PC-3 (cell line): ENCODE measurements at regions of chr20 and their contacts with region 1.

Region 1: GRCh38 chr20:51456511-51457509 is 85.7 kb downstream of the NFATC2 start:
- DNase-seq: peak; percentile 100
- ATAC-seq: peak; percentile 87
- H3K4me3 ChIP-seq: peak overlapping the region; percentile 55
- H3K27ac ChIP-seq: peak overlapping the region; percentile 91
- H3K4me1 ChIP-seq: peaks cover 24% of the 10 kb centered on the region
- H3K27me3 ChIP-seq: no peaks in the 10 kb centered on the region
- CTCF ChIP-seq: no peak

Region 2: DNA sequence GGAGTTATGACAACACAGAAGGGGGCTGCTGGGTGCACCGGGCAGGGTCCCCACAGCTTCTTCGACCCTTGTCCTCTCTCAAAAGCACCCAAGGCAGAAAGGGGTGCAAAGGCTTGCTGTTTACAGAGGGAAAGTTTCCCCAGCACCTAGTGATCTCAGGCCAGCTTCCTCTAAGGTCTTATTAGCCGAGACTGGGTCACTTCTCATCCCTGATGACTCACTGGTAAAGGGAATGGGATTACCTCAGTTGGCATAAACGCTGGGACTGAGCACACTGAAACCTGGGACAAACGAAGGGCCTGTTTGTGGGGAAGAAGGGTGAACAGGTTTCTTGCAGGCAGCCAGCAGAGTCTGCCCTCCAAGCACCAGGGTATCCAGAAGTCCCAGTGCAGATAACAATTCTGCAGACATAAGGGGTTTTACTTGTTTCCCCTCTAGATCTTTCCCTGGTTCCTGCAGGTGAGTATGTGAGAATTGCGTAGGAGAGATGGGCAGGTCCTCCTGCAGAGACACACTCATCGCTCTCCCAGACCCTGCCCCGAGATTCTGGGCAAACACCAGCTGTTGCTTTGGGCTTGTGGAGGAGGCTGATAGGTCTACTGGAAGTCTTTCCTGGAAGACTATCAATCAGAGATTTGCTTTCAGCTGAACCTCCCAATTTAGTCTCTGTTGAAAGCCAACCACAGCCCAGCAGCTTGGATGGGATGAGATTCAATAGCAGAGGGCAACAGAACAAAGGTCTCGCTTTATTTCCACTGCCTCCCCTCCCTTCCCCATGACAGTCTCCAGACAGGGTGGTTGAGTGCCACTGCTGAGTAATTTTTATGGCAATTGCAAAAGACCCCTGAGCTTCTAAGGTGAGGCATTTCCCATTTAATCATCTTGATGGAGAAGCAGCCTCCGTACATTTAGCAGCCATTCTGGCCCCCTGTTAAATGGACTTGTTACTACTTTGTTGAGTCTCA is 459.6 kb before region 1 on chr20:
- CTCF ChIA-PET with region 1: no interaction called
- POLR2A ChIA-PET with region 1: no interaction called
- intact Hi-C with region 1: no loop called
- DNase-seq: peak; percentile 62
- ATAC-seq: peak; percentile 26; the same call in 1 of the 2 replicates
- H3K4me3 ChIP-seq: no peak overlapping the region
- H3K27ac ChIP-seq: no peak overlapping the region
- H3K4me1 ChIP-seq: peaks cover 10% of the 10 kb centered on the region
- H3K27me3 ChIP-seq: no peaks in the 10 kb centered on the region
- CTCF ChIP-seq: no peak

Region 3: GRCh38 chr20:51237278-51237677 is 219.5 kb before region 1 on chr20:
- CTCF ChIA-PET with region 1: no interaction called
- POLR2A ChIA-PET with region 1: interaction called, 10 read pairs
- intact Hi-C with region 1: no loop called
- DNase-seq: no peak
- ATAC-seq: no peak
- H3K4me3 ChIP-seq: no peak overlapping the region
- H3K27ac ChIP-seq: no peak overlapping the region
- H3K4me1 ChIP-seq: no peaks in the 10 kb centered on the region
- H3K27me3 ChIP-seq: peaks cover 27% of the 10 kb centered on the region
- CTCF ChIP-seq: no peak

Region 4: GRCh38 chr20:51423290-51423667 is 33.5 kb before region 1 on chr20:
- CTCF ChIA-PET with region 1: interaction called, 16 read pairs
- POLR2A ChIA-PET with region 1: no interaction called
- intact Hi-C with region 1: no loop called
- DNase-seq: no peak
- ATAC-seq: no peak
- H3K4me3 ChIP-seq: no peak overlapping the region
- H3K27ac ChIP-seq: no peak overlapping the region
- H3K4me1 ChIP-seq: peaks cover 12% of the 10 kb centered on the region
- H3K27me3 ChIP-seq: no peaks in the 10 kb centered on the region
- CTCF ChIP-seq: no peak

Region 5: GRCh38 chr20:51487565-51488268 is 30.9 kb after region 1 on chr20:
- CTCF ChIA-PET with region 1: no interaction called
- POLR2A ChIA-PET with region 1: no interaction called
- intact Hi-C with region 1: loop called (anchors 2 kb)
- DNase-seq: peak; percentile 99
- ATAC-seq: peak; percentile 99
- H3K4me3 ChIP-seq: peak overlapping the region; percentile 63
- H3K27ac ChIP-seq: peak overlapping the region; percentile 92
- H3K4me1 ChIP-seq: peaks cover 25% of the 10 kb centered on the region
- H3K27me3 ChIP-seq: no peaks in the 10 kb centered on the region
- CTCF ChIP-seq: no peak

Region 6: GRCh38 chr20:51531141-51531710 is 74.4 kb after region 1 on chr20:
- CTCF ChIA-PET with region 1: no interaction called
- POLR2A ChIA-PET with region 1: no interaction called
- intact Hi-C with region 1: loop called (anchors 5 kb)
- DNase-seq: peak; percentile 98
- ATAC-seq: peak; percentile 71
- H3K4me3 ChIP-seq: no peak overlapping the region
- H3K27ac ChIP-seq: peak overlapping the region; percentile 78
- H3K4me1 ChIP-seq: peaks cover 37% of the 10 kb centered on the region
- H3K27me3 ChIP-seq: no peaks in the 10 kb centered on the region
- CTCF ChIP-seq: no peak